H1 (cell line): ENCODE measurements at regions of chr3 and their contacts with region 1.

Region 1: GRCh38 chr3:73007992-73008712 is 11.5 kb downstream of the PPP4R2 start:
- DNase-seq: no peak
- H3K4me3 ChIP-seq: no peak overlapping the region
- H3K27ac ChIP-seq: no peak overlapping the region
- H3K4me1 ChIP-seq: no peaks in the 10 kb centered on the region; a peak in 1 of 7 replicates
- H3K27me3 ChIP-seq: no peaks in the 10 kb centered on the region
- CTCF ChIP-seq: no peak
- EP300 ChIP-seq: no peak
- POLR2A ChIP-seq: no peak
- RAD21 ChIP-seq: no peak

Region 2: GRCh38 chr3:73018790-73019441 is 10.8 kb after region 1 on chr3:
- CTCF ChIA-PET with region 1: interaction called, 5 read pairs
- POLR2A ChIA-PET with region 1: interaction called, 12 read pairs
- DNase-seq: no peak
- H3K4me3 ChIP-seq: no peak overlapping the region
- H3K27ac ChIP-seq: no peak overlapping the region
- H3K4me1 ChIP-seq: peaks cover 0 to 3% (median 1%) of the 10 kb centered on the region in 4 experiments; a peak in 4 of 7 replicates
- H3K27me3 ChIP-seq: no peaks in the 10 kb centered on the region
- CTCF ChIP-seq: no peak
- EP300 ChIP-seq: no peak
- POLR2A ChIP-seq: no peak
- RAD21 ChIP-seq: no peak